ENCODE measurements at regions of chr3 and their contacts with region 1.

Region 1: DNA sequence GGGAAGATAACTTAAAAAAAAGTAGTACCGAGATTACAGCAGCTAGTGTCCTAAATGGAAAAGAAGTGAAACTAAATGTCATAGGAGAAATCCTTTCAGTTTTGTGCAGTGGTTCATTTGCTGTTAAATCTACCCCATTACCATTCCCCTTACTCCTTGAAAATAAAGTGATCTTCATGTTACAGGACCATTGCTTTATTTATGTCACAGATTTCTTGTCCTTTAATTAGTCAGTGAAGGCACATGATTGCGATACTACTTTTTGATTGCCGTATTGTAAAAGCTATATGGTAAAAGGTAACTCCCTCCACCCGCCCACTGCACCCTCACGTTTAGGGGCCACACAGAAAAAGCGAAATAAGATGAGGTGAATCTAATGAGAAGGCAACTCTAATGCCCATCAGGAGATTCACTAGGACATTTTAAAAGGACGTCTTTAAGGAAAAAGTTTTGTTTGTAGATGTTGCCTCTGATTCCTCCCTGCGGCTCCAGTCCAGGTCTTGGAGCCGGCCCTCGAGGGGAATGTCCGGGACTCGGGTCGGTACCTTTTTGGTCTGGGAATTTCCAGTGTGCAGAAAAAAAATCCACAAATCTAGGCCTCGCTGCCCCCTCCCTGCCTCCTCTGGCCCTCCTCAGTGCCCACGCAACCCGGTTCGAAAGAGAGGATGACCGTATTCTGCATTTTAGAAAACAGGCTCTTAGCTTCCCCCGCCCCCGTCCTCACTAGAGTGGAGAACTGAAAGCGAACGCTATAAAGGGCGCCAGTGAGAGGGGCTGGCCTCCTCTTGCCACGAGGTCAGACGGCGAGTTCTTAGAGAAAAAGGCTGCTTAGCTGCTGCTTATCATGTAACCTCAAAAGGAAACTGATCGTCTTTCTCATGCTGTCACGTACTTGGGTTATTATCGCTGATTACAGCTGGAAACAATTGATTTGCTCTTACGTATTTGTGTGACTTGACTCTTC is 21.8 kb upstream of the NFKBIZ start:
- DNase-seq: peak; percentile 81
- H3K4me3 Mint-ChIP-seq: peak overlapping the region; percentile 88
- H3K27ac Mint-ChIP-seq: peak overlapping the region; percentile 87
- H3K4me1 Mint-ChIP-seq: peaks cover 25% of the 10 kb centered on the region
- H3K27me3 Mint-ChIP-seq: no peaks in the 10 kb centered on the region
- CTCF ChIP-seq: no peak

Region 2: GRCh38 chr3:101809178-101810021 is 18.1 kb before region 1 on chr3:
- CTCF ChIA-PET with region 1: interaction called, 16 read pairs
- POLR2A ChIA-PET with region 1: interaction called, 9 read pairs
- intact Hi-C with region 1: no loop called
- DNase-seq: peak; percentile 46
- H3K4me3 Mint-ChIP-seq: no peak overlapping the region
- H3K27ac Mint-ChIP-seq: no peak overlapping the region
- H3K4me1 Mint-ChIP-seq: peaks cover 10% of the 10 kb centered on the region
- H3K27me3 Mint-ChIP-seq: no peaks in the 10 kb centered on the region
- CTCF ChIP-seq: peak; percentile 64

Region 3: GRCh38 chr3:101816215-101817149 is 11.0 kb before region 1 on chr3:
- CTCF ChIA-PET with region 1: interaction called, 16 read pairs
- POLR2A ChIA-PET with region 1: interaction called, 36 read pairs
- intact Hi-C with region 1: no loop called
- DNase-seq: peak; percentile 51
- H3K4me3 Mint-ChIP-seq: no peak overlapping the region
- H3K27ac Mint-ChIP-seq: no peak overlapping the region
- H3K4me1 Mint-ChIP-seq: no peaks in the 10 kb centered on the region
- H3K27me3 Mint-ChIP-seq: no peaks in the 10 kb centered on the region
- CTCF ChIP-seq: no peak

Region 4: GRCh38 chr3:101842245-101842934 is 14.9 kb after region 1 on chr3:
- CTCF ChIA-PET with region 1: interaction called, 10 read pairs
- POLR2A ChIA-PET with region 1: interaction called, 121 read pairs
- intact Hi-C with region 1: no loop called
- DNase-seq: no peak
- H3K4me3 Mint-ChIP-seq: no peak overlapping the region
- H3K27ac Mint-ChIP-seq: no peak overlapping the region
- H3K4me1 Mint-ChIP-seq: peaks cover 14% of the 10 kb centered on the region
- H3K27me3 Mint-ChIP-seq: no peaks in the 10 kb centered on the region
- CTCF ChIP-seq: no peak

Region 5: DNA sequence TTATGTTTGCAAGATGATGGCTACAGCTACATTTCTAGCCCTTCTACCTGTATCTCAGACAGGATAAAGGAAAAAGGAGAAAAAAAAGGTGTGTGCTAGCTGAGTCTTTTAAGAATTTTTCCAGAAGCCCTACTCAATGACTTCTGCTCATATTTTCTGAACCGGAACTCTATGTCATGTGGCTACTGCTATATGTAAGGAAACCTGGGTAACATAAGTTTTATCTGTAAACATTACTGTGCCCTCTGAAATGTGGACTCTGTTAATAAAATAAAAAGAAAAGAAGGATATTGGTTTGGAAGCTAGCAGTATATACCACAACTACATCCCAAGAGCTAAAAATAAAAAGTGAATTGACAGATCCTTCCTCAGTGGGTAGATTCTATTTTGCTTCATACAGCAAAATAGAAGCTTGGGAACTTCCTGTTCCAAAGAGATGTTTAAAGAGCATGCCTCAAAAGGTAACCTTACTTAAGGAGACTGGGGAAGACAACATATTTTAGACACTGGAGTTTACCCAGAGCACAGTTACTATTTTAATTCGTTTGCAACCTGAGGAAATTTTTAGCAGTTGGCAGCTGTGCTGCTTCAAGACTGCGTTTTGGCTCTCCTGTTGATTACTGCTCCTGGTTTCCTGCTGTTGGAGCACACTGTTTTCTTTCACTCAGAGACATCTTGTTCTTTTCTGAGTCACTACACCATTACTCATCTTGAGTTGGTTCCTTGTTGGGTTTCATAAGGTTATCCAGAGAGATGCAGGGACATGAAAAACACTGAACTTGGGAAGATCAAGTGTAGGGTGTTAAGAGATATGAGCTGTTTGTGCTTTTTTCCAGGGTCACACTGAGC is 302.5 kb after region 1 on chr3:
- CTCF ChIA-PET with region 1: interaction called, 3 read pairs
- POLR2A ChIA-PET with region 1: interaction called, 20 read pairs
- intact Hi-C with region 1: no loop called
- DNase-seq: peak; percentile 83
- H3K4me3 Mint-ChIP-seq: peak overlapping the region; percentile 43
- H3K27ac Mint-ChIP-seq: peak overlapping the region; percentile 83
- H3K4me1 Mint-ChIP-seq: peaks cover 43% of the 10 kb centered on the region
- H3K27me3 Mint-ChIP-seq: no peaks in the 10 kb centered on the region
- CTCF ChIP-seq: no peak